Gastrocnemius medialis (tissue), 4 donors: ENCODE measurements at regions of chr17 and their contacts with region 1.

Region 1: GRCh38 chr17:40622509-40622928 is 25.1 kb downstream of the SMARCE1 start:
- DNase-seq: no peak
- ATAC-seq: no peak
- H3K4me3 ChIP-seq: no peak overlapping the region
- H3K27ac ChIP-seq: no peak overlapping the region
- H3K4me1 ChIP-seq: peaks cover 0 to 7% of the 10 kb centered on the region in 2 donors
- H3K27me3 ChIP-seq: peaks cover 10 to 34% (median 16%) of the 10 kb centered on the region in 3 donors
- CTCF ChIP-seq: no peak
- POLR2A ChIP-seq: no peak

Region 2: DNA sequence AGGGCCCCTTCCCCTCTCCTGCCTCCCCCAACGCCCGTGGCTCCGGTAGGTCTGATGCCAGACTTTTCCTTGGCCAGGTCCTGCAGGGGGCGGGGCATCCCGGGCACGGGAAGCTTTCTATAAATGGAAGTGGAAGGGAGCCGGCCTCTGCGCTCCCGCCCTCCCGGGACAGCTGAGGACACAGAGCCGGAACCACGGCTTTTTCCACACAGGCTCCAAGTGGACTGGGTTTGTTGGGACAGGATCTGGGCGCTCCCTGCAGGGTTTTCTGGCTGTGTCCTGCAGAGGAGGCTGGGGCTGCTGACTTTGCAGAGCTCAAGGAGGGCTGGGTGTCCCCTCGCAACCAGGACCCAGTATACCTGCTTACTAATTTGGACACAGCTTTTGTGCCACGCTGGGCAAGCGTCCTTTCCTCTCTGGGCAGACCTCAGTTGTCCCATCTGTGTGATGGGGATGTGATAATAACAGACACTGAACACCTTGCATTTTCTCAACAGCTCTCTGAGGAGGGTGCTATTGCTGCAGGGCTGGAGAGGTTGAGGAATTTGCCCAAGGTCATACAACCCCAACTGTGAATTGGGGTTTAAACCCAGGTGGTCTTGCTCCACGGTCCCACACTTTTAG is 122.9 kb before region 1 on chr17:
- in situ Hi-C with region 1: no loop called
- intact Hi-C with region 1: no loop called
- DNase-seq: peak; percentile 81 to 93
- ATAC-seq: peak; percentile 94 to 95
- H3K4me3 ChIP-seq: peak overlapping the region; percentile 11 to 20 (median 18)
- H3K27ac ChIP-seq: peak overlapping the region; percentile 55 to 76 (median 63)
- H3K4me1 ChIP-seq: peaks cover 16 to 18% of the 10 kb centered on the region in 2 donors
- H3K27me3 ChIP-seq: no peaks in the 10 kb centered on the region
- CTCF ChIP-seq: peak in 2 of 5 experiments; percentile 10 to 19
- POLR2A ChIP-seq: no peak

Region 3: DNA sequence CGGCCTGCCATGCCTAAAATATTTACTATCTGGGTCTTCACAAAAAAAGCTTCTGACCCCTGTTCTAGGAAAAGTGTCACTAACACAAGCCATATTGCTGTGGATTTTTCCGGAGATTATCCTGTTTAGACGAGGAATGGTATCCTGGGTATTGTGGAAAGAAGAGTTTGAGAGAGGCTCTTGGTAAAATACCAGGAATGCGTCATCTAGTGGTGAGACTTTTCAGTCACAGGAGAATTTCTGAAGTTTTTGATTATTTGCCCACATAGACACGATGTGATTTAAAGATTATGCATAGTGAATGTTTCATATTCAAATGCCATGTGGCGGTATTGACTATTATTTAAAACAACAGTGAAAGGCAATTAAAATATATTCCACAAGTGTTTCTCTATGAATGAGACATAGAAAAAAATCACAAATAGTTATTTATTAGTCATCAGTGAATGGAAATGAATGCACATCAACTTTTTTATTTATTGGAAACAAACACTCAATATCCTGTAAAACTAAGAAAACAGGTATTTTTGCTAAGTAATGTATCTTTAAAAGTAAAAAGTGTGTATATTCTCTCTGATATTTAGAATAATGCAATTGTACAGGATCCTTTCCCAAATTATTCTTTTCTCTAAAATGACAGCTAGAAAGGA is 169.4 kb after region 1 on chr17:
- in situ Hi-C with region 1: loop called in 3 of 4 experiments (anchors 10 kb)
- intact Hi-C with region 1: loop called (anchors 2 kb)
- DNase-seq: no peak
- ATAC-seq: no peak
- H3K4me3 ChIP-seq: no peak overlapping the region
- H3K27ac ChIP-seq: no peak overlapping the region
- H3K4me1 ChIP-seq: no peaks in the 10 kb centered on the region
- H3K27me3 ChIP-seq: peaks cover 3 to 23% (median 7%) of the 10 kb centered on the region in 3 donors
- CTCF ChIP-seq: peak in 4 of 5 experiments; percentile 7 to 47 (median 40)
- POLR2A ChIP-seq: no peak